Adrenal gland (tissue), 19 donors: ENCODE measurements at regions of chr17 and their contacts with region 1.

Region 1: DNA sequence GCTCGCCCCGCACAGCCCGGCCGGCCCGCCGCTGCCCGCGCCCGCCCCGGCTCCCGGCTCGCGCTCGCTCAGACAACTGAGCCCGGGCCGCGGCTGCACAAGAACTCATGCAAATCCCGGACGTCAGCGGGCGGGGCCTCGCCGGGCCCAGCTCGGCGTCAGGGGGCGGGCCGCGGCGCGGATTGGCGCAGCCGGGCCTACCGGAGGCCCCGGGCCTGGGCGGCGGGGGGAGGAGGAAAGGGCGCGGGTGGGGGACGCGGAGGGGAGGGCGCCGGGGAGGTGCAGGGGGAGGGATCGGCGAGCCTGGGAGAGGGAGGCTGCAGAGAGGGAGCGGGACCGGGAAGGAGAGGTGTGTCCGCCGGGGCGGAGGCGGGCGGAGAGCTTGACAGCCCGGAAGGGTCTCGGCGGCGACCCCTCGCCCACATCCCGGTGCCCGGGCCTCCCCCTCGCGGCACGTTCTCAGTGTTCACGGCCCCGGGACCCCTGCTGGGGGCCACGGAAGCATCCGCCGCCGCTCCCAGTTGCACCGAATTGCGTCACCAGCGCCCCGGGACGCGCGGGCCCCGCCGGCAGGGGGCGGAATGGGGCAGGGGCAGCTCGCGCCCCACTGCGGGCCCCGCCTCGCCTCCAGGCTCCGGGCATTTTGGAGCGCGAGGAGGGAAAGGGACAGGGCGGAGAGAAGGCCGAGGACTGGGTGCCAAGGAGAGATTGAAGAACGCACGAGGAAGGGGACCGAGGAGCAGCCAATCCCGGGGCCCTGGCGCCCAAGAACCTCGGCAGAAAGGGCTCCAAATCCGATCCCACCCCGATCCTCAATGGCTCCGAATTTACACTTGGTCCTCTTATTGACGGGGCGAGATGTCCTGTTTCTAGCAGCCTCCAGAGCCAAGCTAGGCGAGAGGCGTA is at the start of gene CBX4:
- DNase-seq: peak; percentile 95 to 98 (median 97)
- H3K4me3 ChIP-seq: peak within 1 kb of the TSS; percentile 49 to 96 (median 74)
- H3K27ac ChIP-seq: peak within 1 kb of the TSS; percentile 78 to 99 (median 95)
- H3K4me1 ChIP-seq: peaks cover 38 to 66% of the 10 kb centered on the region in 2 donors
- H3K27me3 ChIP-seq: peaks cover 34% of the 10 kb centered on the region
- CTCF ChIP-seq: peak in 5 of 6 experiments; percentile 48 to 86 (median 63)
- POLR2A ChIP-seq: peak; percentile 89 to 96
- total RNA-seq, gene CBX4: 15.1 to 39.3 (median 23.7) TPM

Region 2: GRCh38 chr17:79741751-79742588 is 97.6 kb before region 1 on chr17:
- intact Hi-C with region 1: loop called in 1 of 2 experiments (anchors 10 kb)
- DNase-seq: peak in 6 of 7 donors; percentile 55 to 79 (median 71)
- H3K4me3 ChIP-seq: no peak overlapping the region
- H3K27ac ChIP-seq: no peak overlapping the region
- H3K4me1 ChIP-seq: peaks cover 6 to 7% of the 10 kb centered on the region in 2 donors
- H3K27me3 ChIP-seq: peaks cover 26% of the 10 kb centered on the region
- CTCF ChIP-seq: peak; percentile 60 to 95 (median 82)
- POLR2A ChIP-seq: no peak

Region 3: DNA sequence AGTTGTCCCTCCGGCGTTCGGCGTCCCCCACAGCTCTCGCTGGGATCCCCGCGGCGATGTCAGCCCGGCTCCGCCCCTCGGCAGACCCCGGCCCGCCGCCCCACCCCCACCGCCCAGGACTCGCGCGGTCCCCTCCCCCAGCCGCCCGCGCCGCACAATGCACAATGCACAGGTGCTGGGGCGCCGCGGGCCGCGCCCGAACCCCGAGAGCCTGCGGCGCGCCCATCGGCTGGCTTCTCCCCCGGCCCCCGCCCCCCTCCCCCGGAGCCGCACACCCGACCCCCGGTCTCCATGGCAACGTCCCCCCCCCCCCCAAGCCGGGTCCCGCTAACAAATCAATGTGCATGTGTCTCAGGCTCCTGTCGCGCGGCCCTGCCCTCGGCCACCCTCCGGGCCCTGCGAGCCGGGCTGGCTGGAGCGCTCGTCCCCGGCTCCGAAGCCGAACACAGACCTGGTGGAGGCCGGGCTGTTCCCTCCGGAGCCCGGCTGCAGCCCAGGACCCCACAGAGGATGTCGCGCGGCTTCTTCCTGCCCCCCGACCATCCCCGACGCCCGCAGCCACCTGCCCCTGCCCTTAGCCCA is 42.0 kb before region 1 on chr17:
- intact Hi-C with region 1: loop called (anchors 2 to 5 kb)
- DNase-seq: peak in 2 of 7 donors; percentile 40
- H3K4me3 ChIP-seq: peak overlapping the region in 2 of 4 donors; percentile 48 to 73
- H3K27ac ChIP-seq: peak overlapping the region in 1 of 5 donors; percentile 84
- H3K4me1 ChIP-seq: peaks cover 13 to 30% of the 10 kb centered on the region in 2 donors
- H3K27me3 ChIP-seq: peaks cover 59% of the 10 kb centered on the region
- CTCF ChIP-seq: no peak
- POLR2A ChIP-seq: no peak

Region 4: DNA sequence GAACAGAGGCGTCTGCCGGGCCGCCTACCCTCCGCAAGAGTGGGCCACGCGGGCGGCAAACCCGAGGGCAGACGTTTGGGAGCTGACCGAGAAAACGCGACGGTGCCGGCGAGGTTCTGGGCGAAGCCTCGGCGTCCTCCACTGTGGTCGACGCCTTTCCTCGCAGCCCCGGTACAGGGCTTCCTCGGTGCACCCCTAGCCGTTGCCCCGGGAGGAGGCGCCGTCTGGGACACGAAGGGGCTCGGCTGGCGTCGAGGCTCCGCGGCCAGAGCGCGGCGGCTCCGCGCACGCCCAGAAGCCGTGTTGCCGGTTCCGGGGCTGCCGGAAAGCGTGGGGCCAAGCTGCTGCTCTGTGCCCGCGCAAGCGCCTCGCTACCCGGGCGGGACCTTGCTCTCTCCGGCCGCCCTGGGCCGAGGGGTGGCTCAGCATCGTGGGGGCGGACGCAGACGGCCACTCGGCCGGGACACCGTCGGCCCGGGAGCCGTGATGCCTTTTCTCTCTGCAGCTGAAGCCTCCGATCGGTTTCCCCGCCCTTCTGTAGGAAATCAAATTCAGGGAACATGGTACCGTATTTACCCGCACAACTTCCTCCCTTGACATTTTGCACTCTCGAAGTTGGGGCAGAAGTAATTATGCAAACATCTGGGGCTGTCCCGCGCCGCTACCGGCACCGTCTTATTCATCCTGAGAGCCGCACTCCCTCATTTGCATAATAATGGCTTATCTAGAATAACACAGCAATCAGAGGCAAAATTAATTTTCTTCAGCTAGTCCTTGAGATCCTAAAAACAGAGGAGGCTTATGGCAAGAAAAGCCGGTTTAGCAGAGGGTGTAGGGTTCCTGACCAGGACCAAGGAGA is 35.4 kb before region 1 on chr17:
- intact Hi-C with region 1: loop called (anchors 2 to 5 kb)
- DNase-seq: no peak
- H3K4me3 ChIP-seq: no peak overlapping the region
- H3K27ac ChIP-seq: no peak overlapping the region
- H3K4me1 ChIP-seq: peaks cover 0 to 6% of the 10 kb centered on the region in 2 donors
- H3K27me3 ChIP-seq: peaks cover 95% of the 10 kb centered on the region
- CTCF ChIP-seq: no peak
- POLR2A ChIP-seq: no peak

Region 5: GRCh38 chr17:79970576-79971068 is 131.0 kb after region 1 on chr17:
- intact Hi-C with region 1: loop called in 1 of 2 experiments (anchors 10 kb)
- DNase-seq: peak in 6 of 7 donors; percentile 51 to 81 (median 69)
- H3K4me3 ChIP-seq: no peak overlapping the region
- H3K27ac ChIP-seq: no peak overlapping the region
- H3K4me1 ChIP-seq: no peaks in the 10 kb centered on the region
- H3K27me3 ChIP-seq: no peaks in the 10 kb centered on the region
- CTCF ChIP-seq: peak; percentile 38 to 75 (median 54)
- POLR2A ChIP-seq: no peak

Region 6: GRCh38 chr17:79991140-79991923 is 151.7 kb after region 1 on chr17:
- intact Hi-C with region 1: loop called in 1 of 2 experiments (anchors 5 kb)
- DNase-seq: peak; percentile 83 to 92 (median 89)
- H3K4me3 ChIP-seq: peak overlapping the region in 1 of 4 donors; percentile 39
- H3K27ac ChIP-seq: no peak overlapping the region
- H3K4me1 ChIP-seq: peaks cover 35 to 48% of the 10 kb centered on the region in 2 donors
- H3K27me3 ChIP-seq: no peaks in the 10 kb centered on the region
- CTCF ChIP-seq: peak in 5 of 6 experiments; percentile 24 to 60 (median 50)
- POLR2A ChIP-seq: no peak